PC-3 (cell line): ENCODE measurements at regions of chr3 and their contacts with region 1.

Region 1: GRCh38 chr3:149401215-149401925 is 23.9 kb upstream of the TM4SF1 start:
- DNase-seq: peak; percentile 90
- ATAC-seq: peak; percentile 82
- H3K4me3 ChIP-seq: peak overlapping the region; percentile 26; the same call in 1 of the 2 replicates
- H3K27ac ChIP-seq: peak overlapping the region; percentile 96
- H3K4me1 ChIP-seq: peaks cover 61% of the 10 kb centered on the region
- H3K27me3 ChIP-seq: no peaks in the 10 kb centered on the region
- CTCF ChIP-seq: no peak

Region 2: GRCh38 chr3:149442851-149443544 is 41.6 kb after region 1 on chr3:
- CTCF ChIA-PET with region 1: no interaction called
- POLR2A ChIA-PET with region 1: no interaction called
- intact Hi-C with region 1: loop called (anchors 5 kb)
- DNase-seq: no peak
- ATAC-seq: peak; percentile 71
- H3K4me3 ChIP-seq: no peak overlapping the region
- H3K27ac ChIP-seq: no peak overlapping the region
- H3K4me1 ChIP-seq: peaks cover 16% of the 10 kb centered on the region
- H3K27me3 ChIP-seq: no peaks in the 10 kb centered on the region
- CTCF ChIP-seq: no peak

Region 3: GRCh38 chr3:149473357-149474249 is 72.2 kb after region 1 on chr3:
- CTCF ChIA-PET with region 1: no interaction called
- POLR2A ChIA-PET with region 1: no interaction called
- intact Hi-C with region 1: loop called (anchors 1 kb)
- DNase-seq: peak; percentile 99
- ATAC-seq: peak; percentile 97
- H3K4me3 ChIP-seq: peak overlapping the region; percentile 6; the same call in 1 of the 2 replicates
- H3K27ac ChIP-seq: peak overlapping the region; percentile 86
- H3K4me1 ChIP-seq: peaks cover 39% of the 10 kb centered on the region
- H3K27me3 ChIP-seq: no peaks in the 10 kb centered on the region
- CTCF ChIP-seq: no peak

Region 4: GRCh38 chr3:149603126-149604074 is 202.0 kb after region 1 on chr3:
- CTCF ChIA-PET with region 1: no interaction called
- POLR2A ChIA-PET with region 1: interaction called, 20 read pairs
- intact Hi-C with region 1: no loop called
- DNase-seq: no peak
- ATAC-seq: no peak
- H3K4me3 ChIP-seq: no peak overlapping the region
- H3K27ac ChIP-seq: no peak overlapping the region
- H3K4me1 ChIP-seq: peaks cover 32% of the 10 kb centered on the region
- H3K27me3 ChIP-seq: no peaks in the 10 kb centered on the region
- CTCF ChIP-seq: no peak